ENCODE measurements at regions of chr12 and their contacts with region 1.

Region 1: GRCh38 chr12:7638760-7639555 is 26.8 kb downstream of the APOBEC1 start:
- DNase-seq: peak; percentile 61
- H3K4me3 ChIP-seq: no peak overlapping the region
- H3K27ac ChIP-seq: no peak overlapping the region
- H3K4me1 ChIP-seq: peaks cover 7% of the 10 kb centered on the region
- H3K27me3 ChIP-seq: no peaks in the 10 kb centered on the region
- CTCF ChIP-seq: peak; percentile 66 to 75

Region 2: GRCh38 chr12:7142056-7142644 is 496.8 kb before region 1 on chr12:
- CTCF ChIA-PET with region 1: no interaction called
- dilution Hi-C with region 1: no loop called
- in situ Hi-C with region 1: no loop called
- intact Hi-C with region 1: loop called (anchors 2 kb)
- DNase-seq: peak; percentile 25
- H3K4me3 ChIP-seq: no peak overlapping the region
- H3K27ac ChIP-seq: no peak overlapping the region
- H3K4me1 ChIP-seq: no peaks in the 10 kb centered on the region
- H3K27me3 ChIP-seq: no peaks in the 10 kb centered on the region
- CTCF ChIP-seq: peak; percentile 75

Region 3: GRCh38 chr12:7219599-7220243 is 419.2 kb before region 1 on chr12:
- CTCF ChIA-PET with region 1: no interaction called
- dilution Hi-C with region 1: loop called (anchors 25 kb)
- in situ Hi-C with region 1: loop called (anchors 5 kb)
- intact Hi-C with region 1: loop called (anchors 1 kb)
- DNase-seq: peak; percentile 56
- H3K4me3 ChIP-seq: no peak overlapping the region
- H3K27ac ChIP-seq: no peak overlapping the region
- H3K4me1 ChIP-seq: peaks cover 3% of the 10 kb centered on the region
- H3K27me3 ChIP-seq: peaks cover 9% of the 10 kb centered on the region
- CTCF ChIP-seq: peak; percentile 87 to 94

Region 4: GRCh38 chr12:7374423-7375144 is 264.4 kb before region 1 on chr12:
- CTCF ChIA-PET with region 1: no interaction called
- dilution Hi-C with region 1: no loop called
- in situ Hi-C with region 1: no loop called
- intact Hi-C with region 1: loop called (anchors 1 kb)
- DNase-seq: peak; percentile 9
- H3K4me3 ChIP-seq: no peak overlapping the region
- H3K27ac ChIP-seq: no peak overlapping the region
- H3K4me1 ChIP-seq: peaks cover 1% of the 10 kb centered on the region
- H3K27me3 ChIP-seq: no peaks in the 10 kb centered on the region
- CTCF ChIP-seq: peak; percentile 28 to 34

Region 5: GRCh38 chr12:7460375-7461259 is 178.3 kb before region 1 on chr12:
- CTCF ChIA-PET with region 1: no interaction called
- dilution Hi-C with region 1: no loop called
- in situ Hi-C with region 1: no loop called
- intact Hi-C with region 1: loop called (anchors 1 kb)
- DNase-seq: peak; percentile 33
- H3K4me3 ChIP-seq: no peak overlapping the region
- H3K27ac ChIP-seq: no peak overlapping the region
- H3K4me1 ChIP-seq: no peaks in the 10 kb centered on the region
- H3K27me3 ChIP-seq: no peaks in the 10 kb centered on the region
- CTCF ChIP-seq: peak; percentile 72 to 87

Region 6: GRCh38 chr12:7583571-7583970 is 55.4 kb before region 1 on chr12:
- CTCF ChIA-PET with region 1: no interaction called
- dilution Hi-C with region 1: no loop called
- in situ Hi-C with region 1: no loop called
- intact Hi-C with region 1: loop called (anchors 1 kb)
- DNase-seq: no peak
- H3K4me3 ChIP-seq: no peak overlapping the region
- H3K27ac ChIP-seq: no peak overlapping the region
- H3K4me1 ChIP-seq: no peaks in the 10 kb centered on the region
- H3K27me3 ChIP-seq: peaks cover 8% of the 10 kb centered on the region
- CTCF ChIP-seq: no peak

Region 7: GRCh38 chr12:7695237-7696197 is 56.6 kb after region 1 on chr12 and contains the start of gene GDF3:
- CTCF ChIA-PET with region 1: no interaction called
- dilution Hi-C with region 1: no loop called
- in situ Hi-C with region 1: no loop called
- intact Hi-C with region 1: no loop called
- DNase-seq: no peak
- H3K4me3 ChIP-seq: no peak within 1 kb of the TSS
- H3K27ac ChIP-seq: no peak within 1 kb of the TSS
- H3K4me1 ChIP-seq: no peaks in the 10 kb centered on the region
- H3K27me3 ChIP-seq: no peaks in the 10 kb centered on the region
- CTCF ChIP-seq: no peak
- total RNA-seq, gene GDF3: not detected

Measured in mammary epithelial cell (primary cell).